PC-3 (cell line): ENCODE measurements at regions of chr5 and their contacts with region 1.

Region 1: GRCh38 chr5:163269624-163270023 is 167.8 kb upstream of the CCNG1 start:
- DNase-seq: peak; percentile 77
- ATAC-seq: peak; percentile 93
- H3K4me3 ChIP-seq: peak overlapping the region; percentile 27; the same call in 1 of the 2 replicates
- H3K27ac ChIP-seq: no peak overlapping the region
- H3K4me1 ChIP-seq: peaks cover 18% of the 10 kb centered on the region
- H3K27me3 ChIP-seq: no peaks in the 10 kb centered on the region
- CTCF ChIP-seq: peak; percentile 77

Region 2: DNA sequence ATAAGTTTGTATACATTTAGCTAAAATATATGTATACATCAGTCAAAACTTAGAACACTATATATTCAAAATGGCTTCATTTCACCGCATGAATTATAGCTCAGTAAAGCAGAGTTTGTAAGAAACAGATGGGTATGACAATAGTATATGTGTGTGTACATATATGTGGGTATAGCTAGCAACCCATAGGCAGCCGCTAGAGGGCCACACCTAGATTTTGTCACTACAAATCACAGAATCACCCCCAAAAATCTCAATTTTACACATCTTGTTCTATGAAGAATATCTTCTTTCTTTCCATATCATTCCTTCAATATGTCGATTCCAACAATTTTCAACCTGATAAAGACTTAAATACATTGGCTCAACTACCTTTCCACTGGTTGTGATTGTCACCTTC is 190.0 kb before region 1 on chr5:
- CTCF ChIA-PET with region 1: no interaction called
- POLR2A ChIA-PET with region 1: no interaction called
- intact Hi-C with region 1: loop called (anchors 5 kb)
- DNase-seq: peak; percentile 40
- ATAC-seq: peak; percentile 53; the same call in 1 of the 2 replicates
- H3K4me3 ChIP-seq: no peak overlapping the region
- H3K27ac ChIP-seq: no peak overlapping the region
- H3K4me1 ChIP-seq: no peaks in the 10 kb centered on the region
- H3K27me3 ChIP-seq: no peaks in the 10 kb centered on the region
- CTCF ChIP-seq: peak; percentile 84

Region 3: DNA sequence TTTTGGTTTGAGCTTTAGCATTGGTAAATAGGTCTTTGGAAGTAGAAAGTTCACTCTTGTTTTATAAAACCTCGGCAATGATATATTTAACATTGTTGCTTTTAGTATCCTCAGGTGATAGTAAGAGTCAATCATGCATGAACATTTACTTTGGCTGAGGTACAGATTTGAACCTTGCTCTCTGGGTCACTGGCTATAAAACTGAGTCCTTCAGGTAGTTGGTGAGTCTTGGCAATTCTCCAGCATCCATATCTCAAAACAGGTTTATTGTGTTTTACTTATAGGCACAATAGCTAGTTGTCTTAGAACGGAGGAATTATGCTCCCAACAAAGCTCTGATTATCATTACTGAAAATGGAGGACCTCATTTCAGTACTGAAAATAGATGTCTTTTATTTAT is 310.9 kb after region 1 on chr5:
- CTCF ChIA-PET with region 1: no interaction called
- POLR2A ChIA-PET with region 1: no interaction called
- intact Hi-C with region 1: no loop called
- DNase-seq: peak; percentile 80
- ATAC-seq: no peak; the same call in 1 of the 2 replicates
- H3K4me3 ChIP-seq: no peak overlapping the region
- H3K27ac ChIP-seq: no peak overlapping the region
- H3K4me1 ChIP-seq: peaks cover 7% of the 10 kb centered on the region; the same call in 1 of the 2 replicates
- H3K27me3 ChIP-seq: peaks cover 17% of the 10 kb centered on the region; the same call in 1 of the 2 replicates
- CTCF ChIP-seq: no peak